HCT116 (cell line): ENCODE measurements at regions of chr2 and their contacts with region 1.

Region 1: GRCh38 chr2:201642579-201643215 is 606 bp downstream of the TMEM237 start:
- DNase-seq: peak; percentile 64
- ATAC-seq: peak; percentile 90
- H3K4me3 ChIP-seq: peak overlapping the region; percentile 71 to 90
- H3K27ac ChIP-seq: peak overlapping the region; percentile 64
- H3K4me1 ChIP-seq: peaks cover 4 to 13% of the 10 kb centered on the region in 2 experiments
- H3K27me3 ChIP-seq: no peaks in the 10 kb centered on the region
- CTCF ChIP-seq: no peak
- POLR2A ChIP-seq: peak; percentile 79
- RAD21 ChIP-seq: no peak

Region 2: DNA sequence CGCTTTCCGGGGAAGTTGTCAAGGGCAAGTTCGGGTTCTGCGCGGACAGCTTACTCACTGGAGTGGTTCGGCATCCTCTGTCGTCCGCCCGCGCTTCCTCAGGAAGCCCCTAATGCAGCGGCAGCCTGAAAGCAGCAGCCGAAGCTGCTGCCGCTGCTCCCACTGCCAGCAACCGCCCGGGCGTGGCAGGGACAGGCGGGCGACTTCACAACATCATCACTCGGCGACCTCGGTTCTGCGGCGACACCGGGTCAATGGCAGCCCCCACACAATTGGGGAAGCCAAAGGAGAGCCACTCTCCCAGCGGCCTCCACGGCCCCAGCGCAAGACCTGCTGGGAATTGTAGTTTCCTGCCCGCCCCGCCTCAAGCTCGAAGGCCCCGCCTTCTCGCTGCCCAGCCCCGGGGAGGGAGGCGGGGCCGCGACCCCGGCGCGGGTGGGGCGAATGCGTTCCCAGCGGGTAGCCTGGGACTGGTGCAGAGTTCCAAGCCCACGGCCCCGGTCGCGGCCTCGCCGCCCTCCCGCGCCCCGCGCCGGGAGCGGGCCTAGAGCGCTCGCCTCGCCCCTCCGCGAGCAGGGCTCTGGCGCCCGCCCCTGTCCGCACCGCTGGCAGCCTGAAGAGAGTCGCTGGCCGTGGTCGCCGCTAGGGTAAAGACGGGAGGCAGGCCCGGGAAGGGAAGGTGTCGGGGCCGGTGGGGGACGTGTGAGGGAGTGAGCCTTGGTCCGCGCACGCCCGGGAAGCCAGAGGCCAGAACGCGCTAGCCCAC is 191.2 kb before region 1 on chr2 and contains the starts of genes STRADB and TRAK2:
- CTCF ChIA-PET with region 1: no interaction called
- POLR2A ChIA-PET with region 1: no interaction called
- RAD21 ChIA-PET with region 1: no interaction called
- intact Hi-C with region 1: loop called (anchors 10 kb)
- DNase-seq: peak; percentile 88
- ATAC-seq: peak; percentile 92
- H3K4me3 ChIP-seq: peak within 1 kb of the TSS; percentile 98
- H3K27ac ChIP-seq: peak within 1 kb of the TSS; percentile 69
- H3K4me1 ChIP-seq: peaks cover 10 to 22% of the 10 kb centered on the region in 2 experiments
- H3K27me3 ChIP-seq: no peaks in the 10 kb centered on the region
- CTCF ChIP-seq: peak in 1 of 3 experiments; percentile 17; a peak in 1 of 6 replicates
- POLR2A ChIP-seq: peak; percentile 79
- RAD21 ChIP-seq: peak; percentile 8; the same call in 1 of the 2 replicates
- total RNA-seq, gene STRADB: 17.4 TPM
- total RNA-seq, gene TRAK2: 15.2 TPM